Activated B cell treated with CpG ODN at 0.5 μM for 24 hours (primary cell): ENCODE measurements at regions of chr15 and their contacts with region 1.

Region 1: DNA sequence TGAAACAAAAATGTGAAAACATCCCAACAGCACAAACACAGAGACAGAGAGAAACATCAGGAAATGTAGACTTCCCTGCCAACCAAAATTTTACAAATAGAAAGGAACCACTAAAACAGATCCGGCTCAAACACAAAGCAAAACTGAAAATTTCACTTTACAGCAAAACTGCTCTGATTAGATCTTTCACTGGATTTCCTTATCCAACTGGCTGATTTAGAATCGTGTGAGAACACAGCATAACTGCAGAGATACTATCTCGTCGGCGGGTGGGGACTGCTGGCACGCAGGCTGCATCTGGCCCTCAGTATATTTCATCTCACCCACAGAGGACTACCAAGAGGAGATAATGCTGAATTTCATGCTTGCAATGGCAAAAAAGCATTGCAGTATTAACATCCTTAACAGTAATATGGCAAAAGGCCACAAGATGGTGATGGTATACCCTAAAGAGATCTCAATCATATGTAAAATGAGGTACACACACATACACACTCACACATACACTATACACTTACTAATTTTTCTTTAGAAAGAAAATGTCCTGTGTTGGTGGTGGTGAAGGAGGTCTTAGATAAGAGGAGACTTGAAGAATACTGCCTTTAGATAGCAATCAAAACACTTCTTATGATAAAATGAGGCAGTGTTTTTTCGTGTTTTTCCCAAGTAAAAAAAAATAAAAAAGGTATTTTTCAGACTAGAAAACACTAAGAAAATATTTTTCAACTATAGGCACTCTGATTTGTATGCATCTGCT is 10.6 kb upstream of the LEO1 start:
- DNase-seq: no peak
- ATAC-seq: peak; percentile 90
- H3K4me3 Mint-ChIP-seq: peak overlapping the region; percentile 57
- H3K27ac Mint-ChIP-seq: no peak overlapping the region
- H3K4me1 Mint-ChIP-seq: peaks cover 9% of the 10 kb centered on the region
- H3K27me3 Mint-ChIP-seq: no peaks in the 10 kb centered on the region
- CTCF ChIP-seq: no peak

Region 2: GRCh38 chr15:52050416-52050815 is 68.2 kb after region 1 on chr15:
- CTCF ChIA-PET with region 1: interaction called, 5 read pairs
- POLR2A ChIA-PET with region 1: no interaction called
- intact Hi-C with region 1: loop called (anchors 1 kb)
- DNase-seq: no peak
- ATAC-seq: no peak
- H3K4me3 Mint-ChIP-seq: no peak overlapping the region
- H3K27ac Mint-ChIP-seq: no peak overlapping the region
- H3K4me1 Mint-ChIP-seq: peaks cover 13% of the 10 kb centered on the region
- H3K27me3 Mint-ChIP-seq: no peaks in the 10 kb centered on the region
- CTCF ChIP-seq: no peak

Region 3: DNA sequence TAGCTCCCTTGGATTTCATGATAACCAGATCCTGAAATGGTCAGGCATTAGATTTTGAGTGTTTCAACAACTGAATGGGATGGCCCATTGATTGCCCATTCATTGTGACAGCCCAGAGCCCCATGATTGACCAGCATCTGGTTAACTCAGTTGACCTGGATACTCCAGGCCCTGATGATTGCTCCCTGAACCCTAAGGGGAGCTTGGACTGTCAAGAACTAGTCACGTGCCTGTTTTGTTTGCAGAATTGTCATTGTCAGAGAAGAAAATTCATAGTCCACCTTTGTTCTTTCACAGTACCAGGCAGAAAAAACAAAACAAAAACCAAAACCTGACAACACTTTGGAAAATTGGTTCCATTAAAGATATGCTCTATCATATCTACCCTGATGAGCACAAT is 1049.3 kb after region 1 on chr15:
- CTCF ChIA-PET with region 1: no interaction called
- POLR2A ChIA-PET with region 1: no interaction called
- intact Hi-C with region 1: no loop called
- DNase-seq: no peak
- ATAC-seq: no peak
- H3K4me3 Mint-ChIP-seq: no peak overlapping the region
- H3K27ac Mint-ChIP-seq: no peak overlapping the region
- H3K4me1 Mint-ChIP-seq: no peaks in the 10 kb centered on the region
- H3K27me3 Mint-ChIP-seq: no peaks in the 10 kb centered on the region
- CTCF ChIP-seq: no peak